ENCODE measurements at regions of chr7 and their contacts with region 1.

Region 1: GRCh38 chr7:7968543-7969305 is at the start of gene GLCCI1:
- DNase-seq: peak; percentile 96 to 97 (median 97)
- H3K4me3 ChIP-seq: peak within 1 kb of the TSS; percentile 88
- H3K4me3 Mint-ChIP-seq: peak within 1 kb of the TSS; percentile 83 to 98 (median 92)
- H3K27ac ChIP-seq: peak within 1 kb of the TSS; percentile 73
- H3K27ac Mint-ChIP-seq: peak within 1 kb of the TSS; percentile 67 to 97 (median 92)
- H3K4me1 ChIP-seq: peaks cover 35% of the 10 kb centered on the region
- H3K4me1 Mint-ChIP-seq: peaks cover 18 to 28% (median 23%) of the 10 kb centered on the region in 3 donors
- H3K27me3 ChIP-seq: no peaks in the 10 kb centered on the region
- H3K27me3 Mint-ChIP-seq: no peaks in the 10 kb centered on the region
- total RNA-seq, gene GLCCI1: 9.5 to 12.9 TPM

Region 2: DNA sequence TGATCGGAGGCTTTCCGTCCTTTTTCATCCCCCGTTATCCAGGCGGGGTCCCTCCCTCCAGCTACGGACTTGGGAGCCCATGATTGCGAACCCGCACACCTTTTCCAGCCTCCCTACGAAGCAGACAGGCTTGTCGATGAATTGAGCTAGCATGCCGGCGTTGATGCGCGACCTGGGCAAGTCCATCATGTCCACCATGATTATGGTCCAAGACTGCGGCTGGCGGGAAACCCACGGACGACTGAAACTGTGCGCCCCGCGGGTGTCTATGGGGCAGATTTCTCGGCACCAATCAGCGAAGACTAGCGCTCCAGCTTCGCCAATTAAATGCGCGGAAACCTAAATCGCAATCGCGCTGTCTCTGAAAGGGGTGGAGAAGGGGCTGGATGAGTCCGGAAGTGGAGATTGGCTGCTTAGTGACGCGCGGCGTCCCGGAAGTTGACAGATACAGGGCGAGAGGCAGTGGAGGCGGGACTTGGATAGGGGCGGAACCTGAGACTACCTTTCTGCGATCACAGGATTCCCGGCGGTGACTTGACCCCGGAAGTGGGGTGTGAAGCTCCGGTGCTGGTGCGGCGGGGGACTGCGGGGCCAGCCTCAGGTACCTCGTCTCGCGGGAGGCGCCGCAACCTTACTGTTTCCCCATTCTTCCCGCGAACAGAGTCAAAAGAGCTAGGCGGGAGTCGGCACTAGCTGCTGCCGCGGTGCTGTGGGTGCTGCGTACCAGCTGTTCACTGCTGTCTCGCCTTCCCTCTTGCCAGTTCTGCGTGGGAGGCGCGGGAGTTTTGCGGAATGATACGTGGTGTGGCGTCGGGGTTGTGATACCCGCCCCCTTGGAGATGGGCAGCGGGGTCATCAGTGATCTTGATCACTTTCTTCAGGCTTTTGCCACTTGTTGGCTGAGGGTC is 328.2 kb before region 1 on chr7 and contains the start of gene UMAD1:
- CTCF ChIA-PET with region 1: interaction called, 5 read pairs
- POLR2A ChIA-PET with region 1: interaction called, 36 read pairs
- DNase-seq: peak; percentile 95 to 99 (median 99)
- H3K4me3 ChIP-seq: peak within 1 kb of the TSS; percentile 97
- H3K4me3 Mint-ChIP-seq: peak within 1 kb of the TSS; percentile 80 to 99 (median 97)
- H3K27ac ChIP-seq: peak within 1 kb of the TSS; percentile 97
- H3K27ac Mint-ChIP-seq: peak within 1 kb of the TSS; percentile 94 to 99 (median 98)
- H3K4me1 ChIP-seq: peaks cover 22% of the 10 kb centered on the region
- H3K4me1 Mint-ChIP-seq: peaks cover 42 to 59% (median 58%) of the 10 kb centered on the region in 3 donors
- H3K27me3 ChIP-seq: no peaks in the 10 kb centered on the region
- H3K27me3 Mint-ChIP-seq: peaks cover 0 to 3% of the 10 kb centered on the region in 2 donors
- total RNA-seq, gene UMAD1: 13.5 to 14.8 TPM

Region 3: GRCh38 chr7:7789551-7789988 is 179.2 kb before region 1 on chr7:
- CTCF ChIA-PET with region 1: no interaction called
- POLR2A ChIA-PET with region 1: no interaction called
- DNase-seq: no peak
- H3K4me3 ChIP-seq: no peak overlapping the region
- H3K4me3 Mint-ChIP-seq: no peak overlapping the region
- H3K27ac ChIP-seq: no peak overlapping the region
- H3K27ac Mint-ChIP-seq: no peak overlapping the region
- H3K4me1 ChIP-seq: no peaks in the 10 kb centered on the region
- H3K4me1 Mint-ChIP-seq: peaks cover 0 to 8% (median 5%) of the 10 kb centered on the region in 3 donors
- H3K27me3 ChIP-seq: no peaks in the 10 kb centered on the region
- H3K27me3 Mint-ChIP-seq: no peaks in the 10 kb centered on the region

Region 4: GRCh38 chr7:7884855-7885254 is 83.9 kb before region 1 on chr7:
- CTCF ChIA-PET with region 1: no interaction called
- POLR2A ChIA-PET with region 1: no interaction called
- DNase-seq: no peak
- H3K4me3 ChIP-seq: no peak overlapping the region
- H3K4me3 Mint-ChIP-seq: no peak overlapping the region
- H3K27ac ChIP-seq: no peak overlapping the region
- H3K27ac Mint-ChIP-seq: no peak overlapping the region
- H3K4me1 ChIP-seq: no peaks in the 10 kb centered on the region
- H3K4me1 Mint-ChIP-seq: no peaks in the 10 kb centered on the region
- H3K27me3 ChIP-seq: no peaks in the 10 kb centered on the region
- H3K27me3 Mint-ChIP-seq: no peaks in the 10 kb centered on the region

Region 5: GRCh38 chr7:7944619-7945282 is 24.0 kb before region 1 on chr7:
- CTCF ChIA-PET with region 1: interaction called, 6 read pairs
- POLR2A ChIA-PET with region 1: interaction called, 15 read pairs
- DNase-seq: peak; percentile 21 to 73 (median 54)
- H3K4me3 ChIP-seq: peak overlapping the region; percentile 48
- H3K4me3 Mint-ChIP-seq: peak overlapping the region; percentile 47 to 87 (median 80)
- H3K27ac ChIP-seq: peak overlapping the region; percentile 43
- H3K27ac Mint-ChIP-seq: peak overlapping the region; percentile 84 to 98 (median 94)
- H3K4me1 ChIP-seq: peaks cover 36% of the 10 kb centered on the region
- H3K4me1 Mint-ChIP-seq: peaks cover 45 to 48% (median 47%) of the 10 kb centered on the region in 3 donors
- H3K27me3 ChIP-seq: no peaks in the 10 kb centered on the region
- H3K27me3 Mint-ChIP-seq: peaks cover 0 to 1% of the 10 kb centered on the region in 2 donors

Region 6: DNA sequence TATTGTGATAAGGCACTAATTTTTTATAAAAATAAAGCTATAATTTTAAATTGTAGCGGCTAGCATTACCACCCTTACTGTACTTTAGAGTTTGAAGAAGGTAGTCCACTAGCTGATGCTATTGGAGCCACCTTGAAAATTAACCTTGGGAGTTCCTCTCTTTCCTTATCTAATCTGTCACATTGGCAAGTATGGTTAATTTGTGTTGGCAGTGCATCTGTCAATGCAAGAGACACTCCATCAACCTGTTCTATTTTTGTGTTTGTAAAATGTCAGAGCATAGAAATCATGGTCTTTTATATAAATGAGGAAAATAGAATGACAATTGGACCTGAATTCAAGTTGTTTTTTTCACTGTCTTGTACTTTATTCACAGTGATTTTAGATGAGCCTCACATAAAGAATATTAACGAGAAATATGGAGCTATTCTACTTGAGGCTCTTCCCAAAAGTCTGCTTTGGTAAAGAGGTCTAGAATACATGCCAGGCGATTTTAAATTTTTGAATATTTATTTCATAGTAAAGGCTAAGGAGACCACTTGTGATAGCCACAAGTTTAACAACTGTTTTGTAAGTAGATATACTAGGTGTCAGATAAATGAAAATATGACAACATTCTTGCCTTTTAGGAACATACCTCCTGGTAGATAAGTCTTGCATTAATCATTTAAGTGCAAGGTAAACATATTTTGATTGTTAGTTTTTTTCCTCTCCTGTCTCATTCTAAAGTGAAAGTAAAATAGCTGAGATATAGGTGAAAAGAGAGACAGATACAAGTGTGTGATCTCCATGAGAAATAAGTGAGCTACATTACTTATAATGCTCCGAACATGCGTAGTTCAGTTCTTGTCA is 20.6 kb after region 1 on chr7:
- CTCF ChIA-PET with region 1: no interaction called
- POLR2A ChIA-PET with region 1: interaction called, 13 read pairs
- DNase-seq: no peak
- H3K4me3 ChIP-seq: peak overlapping the region; percentile 7
- H3K4me3 Mint-ChIP-seq: peak overlapping the region; percentile 28 to 84 (median 78)
- H3K27ac ChIP-seq: no peak overlapping the region
- H3K27ac Mint-ChIP-seq: peak overlapping the region; percentile 48 to 97 (median 83)
- H3K4me1 ChIP-seq: peaks cover 33% of the 10 kb centered on the region
- H3K4me1 Mint-ChIP-seq: peaks cover 58 to 81% (median 78%) of the 10 kb centered on the region in 3 donors
- H3K27me3 ChIP-seq: no peaks in the 10 kb centered on the region
- H3K27me3 Mint-ChIP-seq: no peaks in the 10 kb centered on the region

Region 7: DNA sequence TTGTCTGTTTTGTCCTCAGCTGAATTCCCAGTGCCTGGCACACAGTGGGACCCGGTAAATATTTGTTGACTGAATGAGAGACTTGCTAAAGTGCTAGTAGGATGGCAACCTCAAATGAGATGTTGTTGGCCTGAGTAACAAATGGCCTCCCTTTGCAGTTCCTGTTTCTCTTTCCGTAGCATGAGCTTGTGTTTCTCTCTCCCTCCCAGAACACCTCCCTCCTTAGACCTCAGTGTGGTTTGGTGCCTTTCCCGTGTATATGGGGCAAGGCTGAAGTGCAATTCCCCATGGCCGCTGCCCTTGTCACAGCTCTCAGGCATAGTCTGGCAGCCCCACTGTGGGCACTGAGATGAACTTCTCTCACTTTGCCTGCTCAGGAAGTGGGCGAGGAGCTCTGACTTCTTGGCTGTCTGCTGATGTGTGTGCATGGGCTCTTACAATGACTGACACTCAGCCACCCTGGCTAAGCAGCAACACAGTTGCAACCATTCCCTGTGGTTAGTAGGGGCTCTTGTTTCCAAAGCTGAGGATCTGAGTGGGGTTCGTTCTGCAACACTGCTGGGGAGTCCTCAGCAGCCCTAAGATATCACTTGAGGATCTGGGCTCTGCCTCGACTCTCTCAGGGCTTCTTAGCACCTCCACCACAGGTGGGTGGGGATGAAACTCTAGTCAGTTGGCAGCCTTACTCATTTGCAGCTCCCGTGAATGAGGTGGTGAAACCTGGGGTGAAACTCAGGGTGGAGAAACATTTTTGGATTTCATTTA is 157.1 kb after region 1 on chr7:
- CTCF ChIA-PET with region 1: interaction called, 3 read pairs
- POLR2A ChIA-PET with region 1: interaction called, 10 read pairs
- DNase-seq: peak; percentile 74 to 91 (median 79)
- H3K4me3 ChIP-seq: peak overlapping the region; percentile 40
- H3K4me3 Mint-ChIP-seq: peak overlapping the region; percentile 5 to 85 (median 70)
- H3K27ac ChIP-seq: peak overlapping the region; percentile 40
- H3K27ac Mint-ChIP-seq: peak overlapping the region; percentile 89 to 99 (median 97)
- H3K4me1 ChIP-seq: peaks cover 83% of the 10 kb centered on the region
- H3K4me1 Mint-ChIP-seq: peaks cover 72 to 94% (median 87%) of the 10 kb centered on the region in 3 donors
- H3K27me3 ChIP-seq: no peaks in the 10 kb centered on the region
- H3K27me3 Mint-ChIP-seq: no peaks in the 10 kb centered on the region

Region 8: GRCh38 chr7:8176370-8177081 is 207.8 kb after region 1 on chr7:
- CTCF ChIA-PET with region 1: interaction called, 4 read pairs
- POLR2A ChIA-PET with region 1: interaction called, 16 read pairs
- DNase-seq: peak; percentile 28 to 83 (median 68)
- H3K4me3 ChIP-seq: peak overlapping the region; percentile 35
- H3K4me3 Mint-ChIP-seq: peak overlapping the region; percentile 49 to 85 (median 70)
- H3K27ac ChIP-seq: peak overlapping the region; percentile 48
- H3K27ac Mint-ChIP-seq: peak overlapping the region; percentile 91 to 98 (median 95)
- H3K4me1 ChIP-seq: peaks cover 47% of the 10 kb centered on the region
- H3K4me1 Mint-ChIP-seq: peaks cover 59 to 76% (median 63%) of the 10 kb centered on the region in 3 donors
- H3K27me3 ChIP-seq: no peaks in the 10 kb centered on the region
- H3K27me3 Mint-ChIP-seq: no peaks in the 10 kb centered on the region

Region 9: DNA sequence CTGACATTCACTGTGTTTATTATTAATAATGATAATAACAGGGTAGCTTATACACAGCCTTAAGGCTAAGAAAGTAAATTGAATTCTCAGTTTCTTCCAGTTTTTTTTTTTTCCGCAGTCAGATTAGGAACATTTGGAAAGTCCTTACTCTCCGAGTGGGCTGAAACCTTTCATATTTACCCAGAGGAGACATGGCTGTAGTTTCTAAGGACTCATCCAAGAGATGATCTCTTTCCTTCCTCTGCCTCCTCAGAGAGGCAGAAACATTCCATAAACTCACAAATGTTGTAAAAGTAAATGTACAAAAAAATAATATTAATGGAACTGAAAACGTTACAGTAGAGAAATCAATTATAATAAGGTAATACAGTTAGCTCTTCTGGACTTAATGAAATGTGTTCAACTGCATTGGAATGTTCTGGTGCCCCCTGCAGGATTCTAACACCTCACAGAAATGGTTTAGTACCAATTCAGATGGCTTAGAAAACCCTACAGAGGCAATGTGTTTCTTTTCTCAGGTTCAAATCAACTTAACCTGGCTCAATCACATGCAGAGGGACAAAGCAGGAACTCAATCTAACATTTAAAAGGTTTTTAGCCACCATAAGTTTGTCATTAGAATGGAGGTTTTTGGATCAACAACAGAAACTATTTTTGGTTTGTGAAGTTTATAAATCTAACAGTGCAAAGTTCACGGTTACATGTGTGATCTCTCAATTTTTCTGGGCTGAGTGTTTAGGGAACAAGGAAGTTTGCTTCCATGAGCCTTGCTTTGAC is 221.6 kb after region 1 on chr7:
- CTCF ChIA-PET with region 1: interaction called, 13 read pairs
- POLR2A ChIA-PET with region 1: interaction called, 3 read pairs
- DNase-seq: peak; percentile 38 to 74 (median 54)
- H3K4me3 ChIP-seq: no peak overlapping the region
- H3K4me3 Mint-ChIP-seq: no peak overlapping the region
- H3K27ac ChIP-seq: no peak overlapping the region
- H3K27ac Mint-ChIP-seq: no peak overlapping the region
- H3K4me1 ChIP-seq: peaks cover 9% of the 10 kb centered on the region
- H3K4me1 Mint-ChIP-seq: peaks cover 18 to 28% (median 23%) of the 10 kb centered on the region in 3 donors
- H3K27me3 ChIP-seq: no peaks in the 10 kb centered on the region
- H3K27me3 Mint-ChIP-seq: peaks cover 0 to 9% of the 10 kb centered on the region in 2 donors

Region 10: GRCh38 chr7:8481752-8482446 is 513.2 kb after region 1 on chr7:
- CTCF ChIA-PET with region 1: no interaction called
- POLR2A ChIA-PET with region 1: no interaction called
- DNase-seq: no peak
- H3K4me3 ChIP-seq: no peak overlapping the region
- H3K4me3 Mint-ChIP-seq: no peak overlapping the region
- H3K27ac ChIP-seq: no peak overlapping the region
- H3K27ac Mint-ChIP-seq: no peak overlapping the region
- H3K4me1 ChIP-seq: no peaks in the 10 kb centered on the region
- H3K4me1 Mint-ChIP-seq: no peaks in the 10 kb centered on the region
- H3K27me3 ChIP-seq: no peaks in the 10 kb centered on the region
- H3K27me3 Mint-ChIP-seq: no peaks in the 10 kb centered on the region

Region 11: DNA sequence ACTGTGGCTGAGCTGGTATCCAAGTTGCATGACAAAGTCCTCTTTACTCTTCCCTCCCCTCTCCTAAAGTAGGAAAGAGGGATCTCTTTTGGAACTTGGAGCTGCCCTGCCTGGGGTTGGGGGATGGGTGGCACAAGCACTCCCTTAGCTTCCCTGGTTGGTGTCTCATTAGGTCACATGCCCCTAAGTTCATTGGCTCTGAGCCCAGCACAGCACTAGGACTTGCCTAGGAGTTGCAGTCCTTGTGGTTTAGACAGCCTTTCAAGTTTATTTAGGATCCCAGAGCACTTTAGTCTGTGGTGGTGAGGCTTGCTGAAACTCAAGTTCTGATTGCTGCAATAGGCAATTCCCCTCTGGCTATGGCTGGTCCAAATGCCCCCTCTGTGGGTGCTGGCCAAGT is 746.1 kb after region 1 on chr7:
- CTCF ChIA-PET with region 1: no interaction called
- POLR2A ChIA-PET with region 1: no interaction called
- DNase-seq: no peak
- H3K4me3 ChIP-seq: no peak overlapping the region
- H3K4me3 Mint-ChIP-seq: no peak overlapping the region
- H3K27ac ChIP-seq: no peak overlapping the region
- H3K27ac Mint-ChIP-seq: no peak overlapping the region
- H3K4me1 ChIP-seq: no peaks in the 10 kb centered on the region
- H3K4me1 Mint-ChIP-seq: no peaks in the 10 kb centered on the region
- H3K27me3 ChIP-seq: no peaks in the 10 kb centered on the region
- H3K27me3 Mint-ChIP-seq: no peaks in the 10 kb centered on the region

Measured in CD8-positive, alpha-beta memory T cell (primary cell).